ENCODE measurements at regions of chr9 and their contacts with region 1.

Region 1: DNA sequence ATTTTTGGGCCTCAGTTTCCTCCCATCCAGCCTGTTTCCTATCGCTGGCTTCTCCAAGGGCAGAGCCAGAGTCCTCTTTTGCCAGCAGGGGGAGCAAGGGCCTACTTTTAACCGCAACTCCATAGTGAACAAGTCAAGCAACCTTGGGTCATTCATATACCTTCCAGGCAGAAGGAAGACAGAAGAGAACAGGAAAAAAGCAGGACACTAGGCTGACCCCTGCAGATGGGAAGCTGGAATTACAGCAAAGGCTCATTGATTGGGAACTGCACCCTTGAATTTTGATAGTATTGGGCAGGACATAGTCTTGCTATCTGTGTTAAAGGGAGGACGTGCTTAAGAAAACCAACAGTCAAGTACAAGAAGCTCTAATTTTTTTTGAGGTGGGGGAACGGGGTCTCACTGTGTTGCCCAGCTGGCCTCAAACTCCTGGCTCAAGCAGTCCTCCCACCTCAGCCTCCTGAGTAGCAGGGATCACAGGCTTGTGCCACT is 30.1 kb downstream of the QRFP start:
- DNase-seq: peak; percentile 44
- ATAC-seq: no peak

Region 2: GRCh38 chr9:130933114-130934046 is 66.9 kb after region 1 on chr9:
- intact Hi-C with region 1: loop called (anchors 1 kb)
- DNase-seq: peak; percentile 57
- ATAC-seq: peak; percentile 18

Region 3: DNA sequence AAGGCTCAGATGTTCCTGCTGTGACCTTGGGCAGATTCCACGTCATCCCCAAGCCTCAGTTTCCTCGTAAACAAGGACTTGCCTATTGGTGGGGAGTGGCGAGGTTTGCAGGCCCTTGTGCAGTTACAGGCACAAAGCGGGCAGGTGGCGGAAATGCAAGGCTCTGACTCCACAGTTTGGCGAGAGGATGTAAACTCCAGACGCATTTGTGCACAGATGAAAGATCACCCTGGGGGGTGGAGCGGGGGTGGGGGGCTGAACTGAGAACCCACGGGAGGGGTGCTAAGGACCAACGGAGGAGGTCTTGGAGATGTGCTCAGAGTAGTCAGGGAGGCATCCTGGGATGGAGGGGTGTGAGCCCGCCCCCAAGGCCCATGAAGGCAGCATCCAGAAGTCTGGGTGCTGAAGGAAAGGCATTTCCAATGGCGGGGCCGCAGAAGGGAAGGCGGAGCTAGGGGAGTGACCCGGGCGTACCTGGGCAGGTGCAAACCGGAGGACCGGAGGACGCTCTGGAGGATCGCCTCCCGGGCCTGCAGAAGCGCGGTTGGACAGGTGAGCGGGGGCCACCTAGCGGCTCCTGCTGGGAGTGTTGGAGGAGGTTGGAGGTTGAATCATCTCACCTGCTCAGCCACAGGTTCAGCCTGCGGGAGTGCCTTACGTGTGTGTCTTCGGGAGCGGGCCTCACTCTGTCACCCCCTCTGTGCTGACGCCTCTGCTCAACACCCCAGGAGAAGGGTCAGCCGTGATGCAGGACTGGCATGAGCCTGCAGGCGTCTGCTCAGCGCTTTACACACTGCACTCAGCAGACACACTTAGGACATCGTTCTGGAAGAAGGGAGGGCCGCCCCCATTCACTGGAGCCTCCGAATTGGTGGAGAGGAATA is 74.4 kb after region 1 on chr9:
- intact Hi-C with region 1: loop called (anchors 2 kb)
- DNase-seq: peak; percentile 83
- ATAC-seq: peak; percentile 64

Region 4: DNA sequence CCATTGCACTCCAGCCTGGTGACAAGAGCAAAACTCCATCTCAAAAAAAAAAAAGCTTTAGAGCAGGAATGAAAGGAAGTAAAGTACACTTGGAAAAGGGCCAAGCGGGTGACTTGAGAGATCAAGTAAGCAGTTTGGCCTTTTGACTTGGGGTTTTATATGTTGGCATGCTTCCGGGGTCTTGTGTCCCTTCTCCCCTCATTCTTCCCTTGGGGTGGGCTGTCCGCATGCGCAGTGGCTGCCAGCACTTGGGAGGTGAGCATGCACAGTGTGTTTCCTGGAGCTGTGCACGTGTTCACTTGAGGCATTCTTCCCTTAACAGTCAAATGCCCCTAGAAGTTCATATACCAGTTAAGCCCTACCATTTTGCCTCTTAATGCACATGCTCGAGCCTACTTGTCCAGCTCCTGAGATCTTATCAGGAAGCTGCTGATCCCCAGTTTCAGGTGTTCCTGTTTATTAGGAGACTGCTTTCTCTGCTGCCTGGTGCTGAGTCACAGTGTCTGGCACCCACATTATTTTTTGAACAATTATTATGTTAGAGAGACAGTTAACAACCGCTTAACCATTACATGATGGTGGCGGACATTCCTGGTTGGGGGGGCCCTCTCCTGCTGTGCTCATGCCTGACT is 494.8 kb after region 1 on chr9:
- intact Hi-C with region 1: no loop called
- DNase-seq: no peak
- ATAC-seq: no peak